Breast epithelium (tissue), 4 donors: ENCODE measurements at regions of chr18 and their contacts with region 1.

Region 1: DNA sequence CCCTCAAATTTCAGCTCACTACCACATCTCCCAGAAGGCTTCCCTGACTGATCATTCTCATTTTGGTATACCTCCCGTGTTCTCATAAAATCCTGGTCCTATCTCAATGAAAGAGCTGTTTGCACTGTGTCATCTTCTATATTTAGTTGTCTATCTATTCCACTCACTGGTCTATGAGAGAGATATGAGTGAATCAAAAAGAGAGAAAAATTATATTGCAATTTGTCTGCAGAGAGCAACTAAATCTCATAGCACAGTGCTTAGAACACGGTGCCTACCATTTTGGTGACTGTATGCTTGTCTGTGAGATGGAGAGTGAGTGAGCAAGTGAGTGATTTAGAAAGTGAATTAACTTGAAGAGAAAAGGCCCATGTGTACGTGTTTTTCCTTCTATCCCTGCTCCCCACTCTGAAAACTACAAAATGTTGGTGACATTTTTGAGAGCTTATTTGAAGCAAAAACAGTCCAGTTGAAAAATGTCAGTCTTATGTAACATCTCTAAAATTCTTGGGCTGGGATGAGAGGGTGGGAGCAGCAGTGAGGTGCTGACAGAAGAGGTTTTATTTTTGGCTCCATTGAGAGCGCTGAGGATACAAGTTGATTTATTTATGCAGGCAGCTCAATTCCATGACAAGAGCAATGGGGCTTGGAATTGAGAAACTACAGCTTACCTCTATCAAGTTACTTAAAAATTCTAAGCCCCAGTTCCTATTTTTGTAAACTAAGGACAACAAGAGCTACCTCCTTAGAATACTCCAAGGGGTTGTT is 373.5 kb upstream of the CHST9 start:
- DNase-seq: no peak
- H3K4me3 ChIP-seq: no peak overlapping the region
- H3K27ac ChIP-seq: no peak overlapping the region
- H3K4me1 ChIP-seq: no peaks in the 10 kb centered on the region
- H3K27me3 ChIP-seq: no peaks in the 10 kb centered on the region
- CTCF ChIP-seq: no peak
- POLR2A ChIP-seq: no peak

Region 2: DNA sequence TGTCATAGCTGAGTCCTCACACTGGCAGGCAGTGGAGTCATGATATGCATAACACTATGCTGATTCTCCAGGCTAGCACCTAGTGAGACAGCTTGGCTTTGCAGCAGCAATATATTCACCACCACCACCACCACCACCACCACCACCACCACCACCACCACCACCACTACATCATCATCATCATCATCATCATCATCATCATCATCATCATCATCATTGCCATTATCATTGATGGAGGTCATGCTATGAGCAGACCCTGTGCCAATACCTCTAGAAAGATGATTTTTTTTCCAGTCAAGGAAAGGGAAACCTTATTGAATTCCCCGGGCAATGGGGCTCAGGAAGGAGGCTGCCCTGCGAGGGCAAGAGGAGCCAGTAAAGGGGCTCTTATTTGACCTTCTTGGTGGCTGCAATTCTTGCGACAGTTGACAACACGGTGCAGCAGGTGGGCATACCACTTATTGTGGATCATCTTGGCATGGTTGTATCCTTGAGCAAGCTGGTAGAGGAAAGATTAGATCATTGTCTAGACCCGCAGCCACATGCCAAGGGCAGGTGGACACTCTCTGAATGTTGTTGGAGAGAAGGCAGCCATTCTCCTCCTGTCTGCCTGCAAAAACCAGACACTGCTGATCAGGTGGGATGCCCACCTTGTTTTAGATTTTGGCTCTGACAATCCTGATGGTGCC is 203.4 kb before region 1 on chr18:
- intact Hi-C with region 1: no loop called
- DNase-seq: no peak
- H3K4me3 ChIP-seq: no peak overlapping the region
- H3K27ac ChIP-seq: no peak overlapping the region
- H3K4me1 ChIP-seq: no peaks in the 10 kb centered on the region
- H3K27me3 ChIP-seq: no peaks in the 10 kb centered on the region
- CTCF ChIP-seq: no peak
- POLR2A ChIP-seq: no peak

Region 3: GRCh38 chr18:29147944-29148343 is 1589.4 kb after region 1 on chr18:
- intact Hi-C with region 1: loop called (anchors 10 kb)
- DNase-seq: no peak
- H3K4me3 ChIP-seq: no peak overlapping the region
- H3K27ac ChIP-seq: no peak overlapping the region
- H3K4me1 ChIP-seq: no peaks in the 10 kb centered on the region
- H3K27me3 ChIP-seq: no peaks in the 10 kb centered on the region
- CTCF ChIP-seq: no peak
- POLR2A ChIP-seq: no peak